PC-9 (cell line): ENCODE measurements at regions of chr1 and their contacts with region 1.

Region 1: DNA sequence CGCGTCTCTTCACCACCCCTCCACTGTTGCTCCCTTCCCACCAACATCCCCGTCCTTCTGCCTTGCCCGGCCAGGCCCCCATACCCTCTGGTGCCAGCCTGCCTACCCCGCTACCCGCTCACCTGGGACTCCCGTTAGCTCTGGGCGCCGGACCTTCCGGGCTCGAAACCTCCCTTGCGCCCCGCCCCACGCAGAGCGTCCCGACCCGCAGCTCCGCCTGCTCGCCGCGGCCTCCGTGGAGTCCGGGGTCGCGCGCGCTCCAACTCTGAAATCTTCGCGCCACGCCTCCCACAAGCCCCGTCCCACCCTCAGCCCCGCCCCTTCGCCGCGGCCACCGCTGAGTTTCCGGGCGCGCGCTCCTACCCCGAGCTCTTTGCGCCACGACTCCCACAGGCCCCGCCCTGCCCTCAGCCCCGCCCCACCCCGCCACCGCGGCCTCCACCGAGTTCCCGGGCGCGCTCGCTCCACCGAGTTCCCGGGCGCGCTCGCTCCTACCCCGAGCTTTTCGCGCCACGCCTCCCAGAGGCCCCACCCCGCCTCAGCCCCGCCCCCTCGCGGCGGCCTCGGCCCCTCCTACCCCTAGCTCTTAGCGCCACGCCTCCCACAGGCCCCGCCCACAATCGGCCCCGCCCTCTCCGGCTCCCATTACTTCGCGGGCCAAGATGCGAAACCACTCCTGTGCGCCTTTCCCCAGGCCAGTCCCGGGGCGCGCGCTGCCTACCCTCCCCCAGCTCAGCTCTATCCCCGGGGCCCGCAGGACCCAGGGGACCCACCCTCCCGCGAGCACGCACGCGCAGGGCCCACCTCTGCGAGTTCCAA is at the start of gene IFT25:
- DNase-seq: peak; percentile 76 to 99
- H3K4me3 ChIP-seq: peak within 1 kb of the TSS; percentile 98
- H3K27ac ChIP-seq: peak within 1 kb of the TSS; percentile 67
- H3K4me1 ChIP-seq: peaks cover 47% of the 10 kb centered on the region
- H3K27me3 ChIP-seq: no peaks in the 10 kb centered on the region
- CTCF ChIP-seq: no peak
- total RNA-seq, gene IFT25: 98.8 and 128 TPM in 2 replicates

Region 2: GRCh38 chr1:53860967-53861411 is 84.7 kb before region 1 on chr1:
- CTCF ChIA-PET with region 1: interaction called, 3 read pairs
- POLR2A ChIA-PET with region 1: interaction called, 6 read pairs
- intact Hi-C with region 1: loop called (anchors 5 kb)
- DNase-seq: peak; percentile 47 to 50
- H3K4me3 ChIP-seq: no peak overlapping the region
- H3K27ac ChIP-seq: no peak overlapping the region
- H3K4me1 ChIP-seq: no peaks in the 10 kb centered on the region
- H3K27me3 ChIP-seq: no peaks in the 10 kb centered on the region
- CTCF ChIP-seq: peak; percentile 80

Region 3: DNA sequence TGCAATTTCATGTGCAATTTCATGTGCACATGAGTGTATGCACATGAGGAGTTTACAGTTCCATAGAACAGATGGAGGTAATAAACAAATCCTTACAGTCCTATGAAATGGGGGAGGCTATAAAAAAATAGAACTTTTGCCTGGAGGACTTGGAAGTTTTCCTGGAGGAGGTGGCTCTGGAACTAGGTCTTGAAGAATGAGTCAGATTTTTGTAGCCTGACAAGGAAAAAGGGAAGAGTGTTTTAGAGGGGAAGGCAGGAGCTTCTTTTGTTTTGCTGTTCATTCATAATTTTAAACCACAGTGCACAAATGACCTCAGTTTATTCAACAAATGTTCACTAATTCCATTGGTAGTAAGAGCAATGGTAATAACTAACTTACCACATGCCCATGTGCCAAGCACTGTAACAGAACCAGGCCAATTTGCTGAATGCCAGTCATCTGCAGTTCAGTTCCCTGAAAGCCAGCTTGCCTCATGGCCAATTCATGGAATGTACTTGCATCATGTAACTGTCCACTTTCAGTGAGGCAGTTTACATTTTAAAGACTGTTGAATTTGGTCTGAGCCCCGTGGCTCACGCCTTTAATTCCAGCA is 48.9 kb before region 1 on chr1:
- CTCF ChIA-PET with region 1: interaction called, 3 read pairs
- POLR2A ChIA-PET with region 1: interaction called, 27 read pairs
- intact Hi-C with region 1: no loop called
- DNase-seq: peak in 1 of 2 experiments; percentile 51
- H3K4me3 ChIP-seq: no peak overlapping the region
- H3K27ac ChIP-seq: peak overlapping the region; percentile 55
- H3K4me1 ChIP-seq: peaks cover 10% of the 10 kb centered on the region
- H3K27me3 ChIP-seq: no peaks in the 10 kb centered on the region
- CTCF ChIP-seq: no peak

Region 4: GRCh38 chr1:53909946-53910345 is 35.7 kb before region 1 on chr1:
- CTCF ChIA-PET with region 1: no interaction called
- POLR2A ChIA-PET with region 1: no interaction called
- intact Hi-C with region 1: no loop called
- DNase-seq: peak in 1 of 2 experiments; percentile 63
- H3K4me3 ChIP-seq: no peak overlapping the region
- H3K27ac ChIP-seq: 0 out of 2 replicates have a peak overlapping the region, but pooled peaks have one; percentile 27
- H3K4me1 ChIP-seq: peaks cover 10% of the 10 kb centered on the region
- H3K27me3 ChIP-seq: no peaks in the 10 kb centered on the region
- CTCF ChIP-seq: no peak

Region 5: GRCh38 chr1:54052934-54053744 is 107.5 kb after region 1 on chr1 and contains the starts of genes TCEANC2 and TMEM59:
- CTCF ChIA-PET with region 1: no interaction called
- POLR2A ChIA-PET with region 1: interaction called, 33 read pairs
- intact Hi-C with region 1: loop called (anchors 2 kb)
- DNase-seq: peak; percentile 97 to 99
- H3K4me3 ChIP-seq: peak within 1 kb of the TSS; percentile 85
- H3K27ac ChIP-seq: peak within 1 kb of the TSS; percentile 35
- H3K4me1 ChIP-seq: peaks cover 27% of the 10 kb centered on the region
- H3K27me3 ChIP-seq: no peaks in the 10 kb centered on the region
- CTCF ChIP-seq: no peak
- total RNA-seq, gene TCEANC2: 8.8 and 11.5 TPM in 2 replicates
- total RNA-seq, gene TMEM59: 239 and 287 TPM in 2 replicates

Region 6: GRCh38 chr1:54663725-54664124 is 718.1 kb after region 1 on chr1:
- CTCF ChIA-PET with region 1: interaction called, 16 read pairs
- POLR2A ChIA-PET with region 1: no interaction called
- intact Hi-C with region 1: no loop called
- DNase-seq: no peak
- H3K4me3 ChIP-seq: no peak overlapping the region
- H3K27ac ChIP-seq: no peak overlapping the region
- H3K4me1 ChIP-seq: no peaks in the 10 kb centered on the region
- H3K27me3 ChIP-seq: no peaks in the 10 kb centered on the region
- CTCF ChIP-seq: no peak